ENCODE measurements at regions of chr4 and their contacts with region 1.

Region 1: GRCh38 chr4:83109421-83110222 is 4.9 kb downstream of the PLAC8 start:
- DNase-seq: peak in 4 of 5 donors; percentile 18 to 46 (median 26)
- H3K4me3 ChIP-seq: peak overlapping the region; percentile 35
- H3K27ac ChIP-seq: no peak overlapping the region
- H3K4me1 ChIP-seq: no peaks in the 10 kb centered on the region
- H3K27me3 ChIP-seq: no peaks in the 10 kb centered on the region
- CTCF ChIP-seq: no peak
- EP300 ChIP-seq: no peak
- POLR2A ChIP-seq: no peak

Region 2: DNA sequence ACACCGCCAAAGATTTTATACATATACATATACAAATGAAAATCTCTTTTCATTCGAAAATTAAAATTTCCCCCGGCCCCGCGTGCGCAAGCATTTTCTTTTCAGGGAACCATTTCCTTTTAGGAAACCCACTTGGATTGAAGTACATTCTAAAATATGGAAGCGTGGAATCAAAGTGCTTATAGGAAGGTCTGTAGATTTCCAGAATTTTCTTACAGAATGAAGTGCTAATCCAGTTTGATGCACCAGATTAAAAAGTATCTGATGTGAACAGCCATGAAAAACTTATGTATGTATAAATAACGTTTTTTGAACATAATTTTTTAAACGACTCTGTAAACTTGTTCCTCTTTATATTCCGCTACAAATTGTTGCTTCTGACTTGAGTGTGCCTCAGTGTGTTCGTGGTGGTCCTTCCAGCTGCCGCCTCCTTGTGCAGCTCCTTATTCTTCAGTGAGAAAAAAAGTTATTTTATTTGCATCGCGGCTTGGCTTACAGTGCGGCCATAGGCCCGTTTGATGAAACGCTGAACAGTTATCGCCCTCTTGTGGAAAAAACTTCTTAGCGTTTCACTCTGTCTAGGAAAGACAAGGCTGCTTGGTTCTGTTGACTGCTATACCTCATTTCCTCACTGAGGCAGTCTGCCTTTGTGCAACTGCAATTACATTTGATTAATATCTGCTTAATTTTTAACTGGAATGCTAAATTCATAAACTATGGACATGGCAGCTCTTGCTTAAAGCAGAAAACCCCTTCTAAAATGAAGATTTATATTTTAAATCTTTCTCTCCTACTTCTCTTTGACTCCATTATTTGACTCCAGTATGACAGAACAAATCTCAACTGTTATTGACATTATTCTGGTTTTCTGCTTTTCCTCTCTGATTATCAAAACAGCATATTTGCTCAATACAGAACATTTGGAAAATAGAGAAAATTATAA is 1394.1 kb after region 1 on chr4:
- intact Hi-C with region 1: loop called in 1 of 4 experiments (anchors 5 kb)
- DNase-seq: no peak
- H3K4me3 ChIP-seq: no peak overlapping the region
- H3K27ac ChIP-seq: no peak overlapping the region
- H3K4me1 ChIP-seq: peaks cover 2% of the 10 kb centered on the region
- H3K27me3 ChIP-seq: peaks cover 3% of the 10 kb centered on the region
- CTCF ChIP-seq: no peak
- EP300 ChIP-seq: no peak
- POLR2A ChIP-seq: no peak